Activated naive CD4-positive, alpha-beta T cell treated with anti-CD3 and anti-CD28 coated beads for 36 hours (primary cell): ENCODE measurements at regions of chr16 and their contacts with region 1.

Region 1: DNA sequence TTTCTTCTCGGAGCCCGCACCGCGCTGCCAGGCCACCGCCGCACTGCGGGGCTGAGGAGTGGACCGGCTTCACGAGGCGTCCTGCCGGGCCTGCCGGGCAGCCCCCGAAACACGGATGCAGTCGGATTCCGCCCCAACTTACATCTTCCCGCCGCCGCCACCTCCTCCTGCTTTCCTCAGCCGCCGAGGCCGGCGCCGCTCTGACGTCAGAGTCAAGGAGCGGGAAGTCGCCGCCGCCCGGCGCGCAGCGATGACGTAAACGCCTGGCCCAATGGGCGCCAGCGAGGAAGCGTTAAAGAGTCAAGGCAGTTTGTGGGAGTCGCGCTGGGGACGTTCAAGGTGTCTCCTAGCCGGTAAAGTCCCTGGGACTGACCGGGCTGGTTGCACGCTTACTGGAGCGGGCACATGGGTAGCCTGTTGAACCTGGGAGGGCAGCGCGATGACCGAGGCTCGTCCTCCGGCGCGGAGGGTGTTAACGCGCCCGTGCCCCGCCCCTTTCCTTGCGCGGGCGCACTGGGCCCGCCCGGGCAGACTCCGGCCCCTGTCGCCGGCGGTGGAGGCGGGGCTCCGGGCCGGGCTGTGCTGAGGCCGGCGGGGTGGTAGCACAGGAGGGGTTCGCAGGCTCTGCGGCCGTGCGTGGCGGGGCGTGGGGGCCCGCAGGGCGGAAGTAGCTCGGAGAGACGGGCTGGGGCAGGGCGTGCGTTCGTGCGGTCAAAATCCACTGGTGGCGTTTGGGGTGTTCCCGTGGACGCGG is at the start of gene RNPS1:
- DNase-seq: peak; percentile 96
- H3K4me3 Mint-ChIP-seq: peak within 1 kb of the TSS; percentile 94
- H3K27ac Mint-ChIP-seq: peak within 1 kb of the TSS; percentile 97
- H3K4me1 Mint-ChIP-seq: peaks cover 38% of the 10 kb centered on the region
- H3K27me3 Mint-ChIP-seq: no peaks in the 10 kb centered on the region
- total RNA-seq, gene RNPS1: 306 to 311 TPM

Region 2: DNA sequence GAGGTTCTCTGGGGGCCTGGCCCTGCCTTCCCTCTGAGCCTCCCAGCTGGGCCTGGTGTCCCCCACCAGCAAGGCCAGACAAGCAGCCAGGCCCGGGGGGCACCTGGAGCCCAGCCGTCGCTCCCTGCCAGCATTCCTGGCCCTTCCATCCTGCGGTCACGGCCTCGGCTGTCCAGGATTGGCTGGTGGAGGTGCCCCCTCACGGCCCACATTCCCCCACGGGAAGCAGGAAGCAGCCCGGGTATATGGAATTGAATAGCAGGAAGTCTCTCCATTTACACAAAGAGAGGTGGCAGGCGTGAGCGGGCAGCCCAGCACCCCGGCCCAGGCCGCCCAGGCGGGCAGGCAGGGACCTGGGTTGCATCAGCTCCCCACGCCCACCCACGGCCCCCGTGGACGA is 98.0 kb before region 1 on chr16:
- CTCF ChIA-PET with region 1: no interaction called
- intact Hi-C with region 1: no loop called
- DNase-seq: no peak
- H3K4me3 Mint-ChIP-seq: no peak overlapping the region
- H3K27ac Mint-ChIP-seq: no peak overlapping the region
- H3K4me1 Mint-ChIP-seq: no peaks in the 10 kb centered on the region
- H3K27me3 Mint-ChIP-seq: no peaks in the 10 kb centered on the region

Region 3: GRCh38 chr16:2213817-2214720 is 54.0 kb before region 1 on chr16:
- CTCF ChIA-PET with region 1: no interaction called
- intact Hi-C with region 1: loop called (anchors 2 kb)
- DNase-seq: no peak
- H3K4me3 Mint-ChIP-seq: peak overlapping the region; percentile 73
- H3K27ac Mint-ChIP-seq: no peak overlapping the region
- H3K4me1 Mint-ChIP-seq: peaks cover 22% of the 10 kb centered on the region
- H3K27me3 Mint-ChIP-seq: no peaks in the 10 kb centered on the region

Region 4: DNA sequence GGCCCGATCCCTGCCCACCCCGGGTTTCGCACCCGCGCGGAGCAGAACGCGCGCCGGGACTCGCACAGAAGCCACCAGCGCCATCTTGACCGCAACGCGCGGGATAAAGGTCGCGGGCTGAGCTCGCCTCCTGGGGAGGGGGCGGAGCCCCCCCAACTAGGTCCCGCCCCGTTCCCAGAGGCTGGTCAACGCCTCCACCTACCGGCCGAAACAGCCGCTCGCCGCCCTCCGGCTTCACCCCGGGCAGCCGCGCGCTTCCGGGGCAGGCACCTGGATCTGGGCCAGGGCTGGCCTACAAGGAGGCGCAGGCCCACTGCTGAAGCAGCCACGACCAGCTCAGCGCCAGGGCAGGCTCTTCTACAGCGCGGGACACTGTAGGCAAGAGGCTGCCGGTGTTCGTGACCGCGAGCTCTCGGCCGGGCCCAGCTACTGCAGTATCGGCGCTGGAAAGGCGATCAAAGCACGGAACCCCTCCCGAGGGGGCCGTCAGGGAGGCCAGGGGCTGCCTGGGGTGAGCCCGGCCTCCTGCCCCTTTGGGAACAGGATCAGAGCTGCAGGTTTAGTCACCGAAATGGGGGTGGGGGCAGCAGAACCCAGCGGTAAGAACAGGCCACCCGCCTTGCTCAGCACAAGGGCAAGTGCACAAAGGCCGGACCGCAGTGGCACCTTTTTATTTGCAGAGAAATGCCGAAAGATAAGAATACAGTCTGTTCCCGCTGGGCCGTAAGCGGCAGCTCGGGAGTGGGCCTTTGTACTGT is 16.4 kb before region 1 on chr16 and contains the start of gene ECI1:
- CTCF ChIA-PET with region 1: interaction called, 7 read pairs
- intact Hi-C with region 1: loop called (anchors 1 kb)
- DNase-seq: peak; percentile 89
- H3K4me3 Mint-ChIP-seq: peak within 1 kb of the TSS; percentile 87
- H3K27ac Mint-ChIP-seq: peak within 1 kb of the TSS; percentile 87
- H3K4me1 Mint-ChIP-seq: peaks cover 13% of the 10 kb centered on the region
- H3K27me3 Mint-ChIP-seq: no peaks in the 10 kb centered on the region
- total RNA-seq, gene ECI1: 39.7 to 48.3 TPM

Region 5: DNA sequence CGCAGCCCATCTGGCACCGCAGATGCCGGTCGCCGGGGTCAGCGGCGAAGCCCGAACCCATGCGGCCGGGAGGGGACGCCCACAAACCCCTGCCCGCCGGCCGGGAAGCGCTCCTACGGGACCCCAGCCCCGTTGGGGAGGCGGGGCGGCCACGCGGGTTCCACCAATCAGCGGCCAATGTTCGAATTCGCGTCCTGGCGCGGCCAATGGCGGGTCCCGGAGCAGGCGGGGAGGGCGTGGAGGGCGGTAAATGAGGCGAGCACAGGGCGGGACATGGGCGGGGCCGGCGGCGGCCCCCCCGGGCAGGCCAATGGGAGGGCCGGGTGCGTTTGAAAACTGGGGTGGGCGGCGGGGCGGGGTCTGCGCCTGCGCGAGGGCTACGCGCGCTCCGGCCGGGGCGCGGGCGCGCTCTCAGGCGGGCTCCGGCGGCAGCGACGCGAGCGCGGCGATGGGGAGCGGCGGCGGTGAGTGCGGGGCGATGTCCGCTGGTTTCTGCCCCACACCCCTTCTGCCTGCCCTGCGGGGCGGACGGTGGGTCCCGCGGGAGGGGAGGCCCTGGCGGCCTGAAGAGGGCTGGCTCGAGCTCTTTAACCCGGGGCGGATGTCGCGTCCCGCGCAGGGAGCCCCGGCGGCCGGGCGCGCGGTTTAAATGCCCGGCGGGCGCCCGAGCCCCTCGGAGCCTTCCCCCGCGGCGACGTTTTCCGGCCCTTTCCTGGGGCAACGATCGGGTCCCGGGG is 161.1 kb after region 1 on chr16 and contains the start of gene CCNF:
- CTCF ChIA-PET with region 1: no interaction called
- intact Hi-C with region 1: loop called (anchors 1 kb)
- DNase-seq: peak; percentile 98
- H3K4me3 Mint-ChIP-seq: peak within 1 kb of the TSS; percentile 94
- H3K27ac Mint-ChIP-seq: peak within 1 kb of the TSS; percentile 81
- H3K4me1 Mint-ChIP-seq: peaks cover 16% of the 10 kb centered on the region
- H3K27me3 Mint-ChIP-seq: peaks cover 4% of the 10 kb centered on the region
- total RNA-seq, gene CCNF: 73.5 to 74.5 TPM

Region 6: DNA sequence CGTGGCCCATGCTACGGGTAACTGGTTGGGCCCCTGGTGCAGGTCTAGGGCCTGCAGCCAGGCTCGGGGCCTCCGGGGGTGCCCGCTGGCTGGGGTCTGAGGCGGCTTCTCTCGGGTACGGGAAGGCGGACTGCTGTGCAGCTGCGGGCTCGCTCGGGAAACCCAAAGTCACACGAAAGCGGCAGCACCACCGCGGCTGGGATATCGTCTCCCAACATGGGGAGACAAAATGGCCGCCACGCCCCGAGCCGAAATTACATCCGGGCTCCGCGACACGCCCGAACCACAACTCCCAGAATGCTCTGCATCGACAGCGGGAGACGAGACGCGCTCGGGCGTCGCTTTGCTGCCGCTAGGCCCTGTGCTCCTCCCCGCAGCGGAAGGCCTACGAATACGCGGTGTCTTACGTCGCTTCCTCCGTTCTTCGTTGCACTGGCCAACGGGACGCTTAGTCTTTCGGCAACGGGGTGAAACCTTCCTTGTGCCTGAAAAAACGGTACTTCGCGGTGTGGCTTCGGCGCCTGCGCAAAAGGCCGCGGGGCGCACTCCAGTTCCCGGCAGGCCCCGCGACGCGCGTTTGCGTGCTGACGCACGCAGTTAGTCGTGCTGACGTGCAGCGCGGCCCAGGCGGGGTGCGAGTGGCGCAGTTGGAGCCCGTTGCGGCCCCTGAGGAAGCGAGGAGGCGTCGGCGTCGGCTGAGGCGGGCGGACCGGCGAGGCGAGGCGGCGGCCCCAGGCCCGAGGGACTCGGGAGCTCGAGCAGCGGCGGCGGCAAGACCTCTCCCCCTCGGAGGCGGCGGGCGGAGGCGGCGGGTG is 484.2 kb after region 1 on chr16 and contains the start of gene SRRM2:
- CTCF ChIA-PET with region 1: no interaction called
- intact Hi-C with region 1: loop called (anchors 1 kb)
- DNase-seq: peak; percentile 97
- H3K4me3 Mint-ChIP-seq: peak within 1 kb of the TSS; percentile 87
- H3K27ac Mint-ChIP-seq: peak within 1 kb of the TSS; percentile 99
- H3K4me1 Mint-ChIP-seq: peaks cover 42% of the 10 kb centered on the region
- H3K27me3 Mint-ChIP-seq: no peaks in the 10 kb centered on the region
- total RNA-seq, gene SRRM2: 607 to 649 TPM